Heart right ventricle (tissue), 16 donors: ENCODE measurements at regions of chr15 and their contacts with region 1.

Region 1: DNA sequence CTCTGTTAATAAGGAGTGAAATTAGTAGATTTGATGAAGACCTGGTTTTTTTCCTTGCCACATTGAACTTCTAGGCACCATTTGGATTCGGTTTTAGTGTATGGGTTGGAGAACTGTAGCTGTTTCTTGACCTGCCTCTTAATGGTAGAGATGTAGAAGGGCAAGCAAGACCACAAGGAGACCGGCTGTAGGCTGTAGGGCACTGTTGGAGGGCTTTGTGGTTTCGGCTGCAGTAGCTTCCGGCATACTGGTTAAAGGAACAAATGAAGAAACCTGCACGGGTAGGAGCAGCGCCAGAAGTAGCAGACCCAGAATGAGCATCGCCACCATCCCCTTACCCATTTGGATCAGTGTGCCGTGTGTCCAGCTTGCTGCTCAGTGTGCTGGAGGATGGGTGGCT is 7.9 kb downstream of the PCLAF start:
- DNase-seq: no peak
- ATAC-seq: no peak
- H3K4me3 ChIP-seq: no peak overlapping the region
- H3K27ac ChIP-seq: no peak overlapping the region
- H3K4me1 ChIP-seq: no peaks in the 10 kb centered on the region
- H3K27me3 ChIP-seq: no peaks in the 10 kb centered on the region
- CTCF ChIP-seq: no peak

Region 2: GRCh38 chr15:64527263-64527984 is 154.1 kb after region 1 on chr15:
- intact Hi-C with region 1: no loop called
- DNase-seq: no peak
- ATAC-seq: no peak
- H3K4me3 ChIP-seq: no peak overlapping the region
- H3K27ac ChIP-seq: no peak overlapping the region
- H3K4me1 ChIP-seq: peaks cover 0 to 31% (median 4%) of the 10 kb centered on the region in 9 donors
- H3K27me3 ChIP-seq: no peaks in the 10 kb centered on the region
- CTCF ChIP-seq: no peak

Region 3: GRCh38 chr15:64938192-64938591 is 564.8 kb after region 1 on chr15:
- intact Hi-C with region 1: loop called in 1 of 10 experiments (anchors 5 kb)
- DNase-seq: no peak
- ATAC-seq: peak in 1 of 8 donors; percentile 35
- H3K4me3 ChIP-seq: no peak overlapping the region
- H3K27ac ChIP-seq: no peak overlapping the region
- H3K4me1 ChIP-seq: no peaks in the 10 kb centered on the region
- H3K27me3 ChIP-seq: no peaks in the 10 kb centered on the region
- CTCF ChIP-seq: no peak